ENCODE measurements at regions of chr18 and their contacts with region 1.

Region 1: GRCh38 chr18:54444319-54444914 is 86.7 kb downstream of the C18orf54 start:
- DNase-seq: peak; percentile 32
- ATAC-seq: peak; percentile 87
- H3K4me3 ChIP-seq: no peak overlapping the region
- H3K27ac ChIP-seq: no peak overlapping the region
- H3K4me1 ChIP-seq: no peaks in the 10 kb centered on the region
- H3K27me3 ChIP-seq: no peaks in the 10 kb centered on the region
- CTCF ChIP-seq: peak; percentile 74
- EP300 ChIP-seq: no peak
- POLR2A ChIP-seq: no peak
- RAD21 ChIP-seq: peak; percentile 60

Region 2: GRCh38 chr18:54671291-54671881 is 227.0 kb after region 1 on chr18:
- CTCF ChIA-PET with region 1: interaction called, 13 read pairs
- POLR2A ChIA-PET with region 1: no interaction called
- in situ Hi-C with region 1: no loop called
- intact Hi-C with region 1: loop called (anchors 2 kb)
- DNase-seq: peak; percentile 19
- ATAC-seq: no peak
- H3K4me3 ChIP-seq: no peak overlapping the region
- H3K27ac ChIP-seq: no peak overlapping the region
- H3K4me1 ChIP-seq: no peaks in the 10 kb centered on the region
- H3K27me3 ChIP-seq: no peaks in the 10 kb centered on the region
- CTCF ChIP-seq: peak; percentile 47
- EP300 ChIP-seq: no peak
- POLR2A ChIP-seq: no peak
- RAD21 ChIP-seq: no peak